Naive thymus-derived CD4-positive, alpha-beta T cell (primary cell): ENCODE measurements at regions of chr2 and their contacts with region 1.

Region 1: GRCh38 chr2:204325468-204325867 is 219.8 kb upstream of the PARD3B start:
- DNase-seq: peak; percentile 18 to 80 (median 71)
- ATAC-seq: peak; percentile 83
- H3K4me3 ChIP-seq: no peak overlapping the region
- H3K4me3 Mint-ChIP-seq: peak overlapping the region in 1 of 10 donors; percentile 36
- H3K27ac ChIP-seq: no peak overlapping the region
- H3K27ac Mint-ChIP-seq: peak overlapping the region in 1 of 9 donors; percentile 15
- H3K4me1 ChIP-seq: no peaks in the 10 kb centered on the region
- H3K4me1 Mint-ChIP-seq: peaks cover 0 to 14% (median 4%) of the 10 kb centered on the region in 7 donors
- H3K27me3 ChIP-seq: no peaks in the 10 kb centered on the region
- H3K27me3 Mint-ChIP-seq: peaks cover 5 to 12% (median 7%) of the 10 kb centered on the region in 5 donors

Region 2: DNA sequence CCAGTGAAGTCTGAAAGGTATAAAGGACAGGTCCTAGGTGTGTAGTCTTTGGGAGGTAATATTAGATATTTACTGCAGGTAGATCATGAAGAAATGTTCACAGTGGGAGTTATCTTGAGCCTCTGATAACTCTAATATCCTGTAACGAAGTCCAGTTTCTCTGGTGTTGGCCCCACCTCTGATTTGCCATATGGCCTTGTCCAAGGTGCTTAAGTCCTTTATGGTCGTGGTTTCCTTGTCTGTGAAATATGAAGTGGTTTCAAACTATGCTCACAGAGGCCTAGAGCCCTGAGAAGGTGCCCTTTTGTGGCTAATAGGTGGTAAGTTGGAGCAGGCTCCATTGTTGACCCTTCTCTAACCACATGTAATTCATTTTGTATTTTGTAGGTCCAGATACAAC is 198.2 kb before region 1 on chr2:
- CTCF ChIA-PET with region 1: no interaction called
- POLR2A ChIA-PET with region 1: no interaction called
- intact Hi-C with region 1: no loop called
- DNase-seq: no peak
- ATAC-seq: no peak
- H3K4me3 ChIP-seq: no peak overlapping the region
- H3K4me3 Mint-ChIP-seq: no peak overlapping the region
- H3K27ac ChIP-seq: no peak overlapping the region
- H3K27ac Mint-ChIP-seq: no peak overlapping the region
- H3K4me1 ChIP-seq: no peaks in the 10 kb centered on the region
- H3K4me1 Mint-ChIP-seq: no peaks in the 10 kb centered on the region
- H3K27me3 ChIP-seq: no peaks in the 10 kb centered on the region
- H3K27me3 Mint-ChIP-seq: peaks cover 0 to 25% (median 13%) of the 10 kb centered on the region in 5 donors

Region 3: DNA sequence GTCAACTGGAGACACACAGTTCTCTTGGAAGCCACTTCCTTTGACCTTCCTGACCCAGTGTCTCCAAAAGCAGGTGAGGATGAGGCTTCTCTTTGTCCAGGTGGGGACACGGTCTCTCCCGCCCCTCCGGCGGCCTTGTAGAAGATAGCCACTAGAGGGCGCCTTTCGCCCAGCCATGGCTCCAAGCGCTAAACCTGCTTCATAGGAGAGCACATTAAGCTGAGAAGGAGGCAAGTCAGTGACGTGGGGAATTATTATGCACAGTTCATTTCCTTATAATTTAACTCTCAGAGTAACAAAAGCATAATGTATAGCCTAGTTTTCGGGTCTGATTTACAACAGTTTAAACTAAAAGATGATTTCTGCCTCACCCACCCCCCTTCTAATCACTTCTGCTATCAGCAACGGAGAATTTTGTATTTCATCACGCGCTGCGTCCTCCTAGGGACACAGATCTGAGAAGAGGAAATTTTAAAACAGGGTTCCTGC is 180.2 kb before region 1 on chr2:
- CTCF ChIA-PET with region 1: no interaction called
- POLR2A ChIA-PET with region 1: no interaction called
- intact Hi-C with region 1: loop called in 1 of 2 experiments (anchors 1 kb)
- DNase-seq: peak; percentile 50 to 82 (median 76)
- ATAC-seq: peak; percentile 98
- H3K4me3 ChIP-seq: peak overlapping the region; percentile 61
- H3K4me3 Mint-ChIP-seq: peak overlapping the region; percentile 82 to 92 (median 86)
- H3K27ac ChIP-seq: peak overlapping the region; percentile 29
- H3K27ac Mint-ChIP-seq: peak overlapping the region; percentile 22 to 83 (median 56)
- H3K4me1 ChIP-seq: peaks cover 0 to 4% of the 10 kb centered on the region in 2 donors
- H3K4me1 Mint-ChIP-seq: peaks cover 3 to 11% (median 10%) of the 10 kb centered on the region in 7 donors
- H3K27me3 ChIP-seq: no peaks in the 10 kb centered on the region
- H3K27me3 Mint-ChIP-seq: peaks cover 0 to 43% (median 15%) of the 10 kb centered on the region in 5 donors

Region 4: GRCh38 chr2:205133544-205133943 is 808.1 kb after region 1 on chr2:
- CTCF ChIA-PET with region 1: no interaction called
- POLR2A ChIA-PET with region 1: no interaction called
- intact Hi-C with region 1: loop called in 1 of 2 experiments (anchors 2 kb)
- DNase-seq: no peak
- ATAC-seq: no peak
- H3K4me3 ChIP-seq: no peak overlapping the region
- H3K4me3 Mint-ChIP-seq: no peak overlapping the region
- H3K27ac ChIP-seq: no peak overlapping the region
- H3K27ac Mint-ChIP-seq: no peak overlapping the region
- H3K4me1 ChIP-seq: peaks cover 0 to 16% of the 10 kb centered on the region in 2 donors
- H3K4me1 Mint-ChIP-seq: peaks cover 13 to 31% (median 23%) of the 10 kb centered on the region in 7 donors
- H3K27me3 ChIP-seq: no peaks in the 10 kb centered on the region
- H3K27me3 Mint-ChIP-seq: no peaks in the 10 kb centered on the region

Region 5: GRCh38 chr2:205766779-205767359 is 1441.4 kb after region 1 on chr2:
- CTCF ChIA-PET with region 1: no interaction called
- POLR2A ChIA-PET with region 1: no interaction called
- intact Hi-C with region 1: loop called in 1 of 2 experiments (anchors 1 kb)
- DNase-seq: peak in 8 of 9 donors; percentile 7 to 49 (median 40)
- ATAC-seq: peak; percentile 49
- H3K4me3 ChIP-seq: no peak overlapping the region
- H3K4me3 Mint-ChIP-seq: peak overlapping the region in 1 of 10 donors; percentile 25
- H3K27ac ChIP-seq: no peak overlapping the region
- H3K27ac Mint-ChIP-seq: no peak overlapping the region
- H3K4me1 ChIP-seq: no peaks in the 10 kb centered on the region
- H3K4me1 Mint-ChIP-seq: peaks cover 0 to 12% (median 8%) of the 10 kb centered on the region in 7 donors
- H3K27me3 ChIP-seq: no peaks in the 10 kb centered on the region
- H3K27me3 Mint-ChIP-seq: peaks cover 27 to 54% (median 35%) of the 10 kb centered on the region in 5 donors

Region 6: DNA sequence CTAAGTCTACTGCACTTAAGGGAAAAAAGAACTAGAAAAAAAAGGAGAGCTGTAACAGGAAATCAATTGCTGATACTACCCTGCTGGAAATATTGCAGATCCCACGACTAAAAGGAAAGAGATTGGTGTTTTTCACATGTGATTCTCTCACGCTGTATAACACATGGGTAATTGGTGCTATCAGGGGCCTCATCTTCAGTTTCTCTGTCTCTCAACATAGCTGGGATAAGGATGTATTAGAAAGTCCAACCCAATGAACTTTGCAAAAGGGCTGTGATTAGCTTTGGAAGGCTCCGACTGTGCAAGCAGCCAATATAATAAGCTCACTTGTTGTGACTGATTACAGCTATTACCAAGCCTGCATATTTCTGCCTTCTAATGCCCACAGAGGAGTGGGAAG is 1490.2 kb after region 1 on chr2:
- CTCF ChIA-PET with region 1: no interaction called
- POLR2A ChIA-PET with region 1: no interaction called
- intact Hi-C with region 1: loop called (anchors 1 to 5 kb)
- DNase-seq: no peak
- ATAC-seq: no peak
- H3K4me3 ChIP-seq: no peak overlapping the region
- H3K4me3 Mint-ChIP-seq: no peak overlapping the region
- H3K27ac ChIP-seq: no peak overlapping the region
- H3K27ac Mint-ChIP-seq: no peak overlapping the region
- H3K4me1 ChIP-seq: no peaks in the 10 kb centered on the region
- H3K4me1 Mint-ChIP-seq: no peaks in the 10 kb centered on the region
- H3K27me3 ChIP-seq: no peaks in the 10 kb centered on the region
- H3K27me3 Mint-ChIP-seq: peaks cover 4 to 35% (median 26%) of the 10 kb centered on the region in 5 donors

Region 7: GRCh38 chr2:205925373-205926337 is 1600.2 kb after region 1 on chr2:
- CTCF ChIA-PET with region 1: interaction called, 5 read pairs
- POLR2A ChIA-PET with region 1: no interaction called
- intact Hi-C with region 1: loop called (anchors 1 kb)
- DNase-seq: peak; percentile 23 to 79 (median 61)
- ATAC-seq: peak; percentile 81
- H3K4me3 ChIP-seq: no peak overlapping the region
- H3K4me3 Mint-ChIP-seq: peak overlapping the region in 6 of 10 donors; percentile 9 to 62 (median 60)
- H3K27ac ChIP-seq: no peak overlapping the region
- H3K27ac Mint-ChIP-seq: peak overlapping the region in 1 of 9 donors; percentile 21
- H3K4me1 ChIP-seq: peaks cover 0 to 5% of the 10 kb centered on the region in 2 donors
- H3K4me1 Mint-ChIP-seq: peaks cover 5 to 13% (median 9%) of the 10 kb centered on the region in 7 donors
- H3K27me3 ChIP-seq: peaks cover 0 to 4% of the 10 kb centered on the region in 2 donors
- H3K27me3 Mint-ChIP-seq: peaks cover 40 to 58% (median 50%) of the 10 kb centered on the region in 5 donors